Activated T-helper 2 cell treated with anti-CD3 and anti-CD28 coated beads, Interferon-gamma antibody, Interleukin-2, Interleukin-4, amounts not matched to agents 10 μg/mL and 5 μg/mL and 100 μg/mL, durations not matched to agents 14 hours and 24 hours and 36 hours (primary cell): ENCODE measurements at regions of chr2 and their contacts with region 1.

Region 1: GRCh38 chr2:134232868-134233727 is 20.8 kb upstream of the MGAT5 start:
- DNase-seq: no peak
- H3K4me3 Mint-ChIP-seq: no peak overlapping the region
- H3K27ac Mint-ChIP-seq: peak overlapping the region; percentile 10
- H3K4me1 Mint-ChIP-seq: peaks cover 42% of the 10 kb centered on the region
- H3K27me3 Mint-ChIP-seq: peaks cover 17% of the 10 kb centered on the region

Region 2: GRCh38 chr2:133229976-133230375 is 1003.1 kb before region 1 on chr2:
- intact Hi-C with region 1: no loop called
- DNase-seq: no peak
- H3K4me3 Mint-ChIP-seq: no peak overlapping the region
- H3K27ac Mint-ChIP-seq: no peak overlapping the region
- H3K4me1 Mint-ChIP-seq: no peaks in the 10 kb centered on the region
- H3K27me3 Mint-ChIP-seq: no peaks in the 10 kb centered on the region

Region 3: DNA sequence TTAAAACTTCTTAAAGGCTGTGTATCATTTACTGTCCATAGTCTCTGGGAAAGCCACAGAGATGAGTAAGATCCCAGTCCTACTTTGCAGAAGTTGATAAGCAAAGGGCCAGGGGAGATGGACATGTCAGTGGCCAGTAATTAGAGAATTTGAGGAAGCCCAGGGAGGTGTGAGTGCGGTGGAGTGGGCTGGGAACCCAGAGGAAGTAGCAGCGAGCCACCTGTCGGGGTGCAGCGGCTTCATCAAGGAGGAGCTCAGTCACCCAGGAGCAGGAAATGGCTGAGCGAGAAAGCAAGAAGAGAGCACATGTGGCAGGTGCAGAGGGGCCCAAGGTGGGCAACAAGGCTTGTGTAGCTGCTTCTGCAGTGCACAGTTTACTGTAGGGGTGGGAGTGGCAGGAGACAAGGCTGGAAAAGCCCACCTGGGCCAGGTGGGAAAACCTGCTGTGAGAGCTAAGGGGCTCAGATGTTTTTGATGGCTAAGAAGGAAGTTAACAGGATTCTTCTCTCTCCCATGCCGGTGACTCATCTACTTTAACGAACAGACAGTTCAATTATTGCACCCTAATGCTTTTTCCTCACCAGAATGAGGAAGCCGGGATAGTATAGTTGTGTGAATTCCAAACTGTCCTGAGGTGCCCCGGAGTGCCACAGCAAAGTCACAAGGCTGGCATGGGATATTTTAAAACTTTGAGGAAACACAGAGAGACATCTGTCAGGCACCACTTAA is 14.0 kb before region 1 on chr2:
- intact Hi-C with region 1: loop called (anchors 1 kb)
- DNase-seq: no peak
- H3K4me3 Mint-ChIP-seq: no peak overlapping the region
- H3K27ac Mint-ChIP-seq: no peak overlapping the region
- H3K4me1 Mint-ChIP-seq: peaks cover 27% of the 10 kb centered on the region
- H3K27me3 Mint-ChIP-seq: peaks cover 41% of the 10 kb centered on the region

Region 4: GRCh38 chr2:134282629-134283400 is 49.7 kb after region 1 on chr2:
- intact Hi-C with region 1: no loop called
- DNase-seq: no peak
- H3K4me3 Mint-ChIP-seq: no peak overlapping the region
- H3K27ac Mint-ChIP-seq: peak overlapping the region; percentile 43
- H3K4me1 Mint-ChIP-seq: peaks cover 25% of the 10 kb centered on the region
- H3K27me3 Mint-ChIP-seq: peaks cover 41% of the 10 kb centered on the region

Region 5: GRCh38 chr2:134314681-134315368 is 81.7 kb after region 1 on chr2:
- intact Hi-C with region 1: no loop called
- DNase-seq: no peak
- H3K4me3 Mint-ChIP-seq: no peak overlapping the region
- H3K27ac Mint-ChIP-seq: no peak overlapping the region
- H3K4me1 Mint-ChIP-seq: peaks cover 13% of the 10 kb centered on the region
- H3K27me3 Mint-ChIP-seq: peaks cover 21% of the 10 kb centered on the region